Activated B cell treated with CpG ODN at 0.5 μM for 24 hours (primary cell): ENCODE measurements at regions of chr15 and their contacts with region 1.

Region 1: GRCh38 chr15:72783563-72784237 is at the start of gene ADPGK:
- DNase-seq: peak; percentile 100
- ATAC-seq: peak; percentile 84
- H3K4me3 Mint-ChIP-seq: peak within 1 kb of the TSS; percentile 94
- H3K27ac Mint-ChIP-seq: peak within 1 kb of the TSS; percentile 99
- H3K4me1 Mint-ChIP-seq: peaks cover 46% of the 10 kb centered on the region
- H3K27me3 Mint-ChIP-seq: no peaks in the 10 kb centered on the region
- CTCF ChIP-seq: no peak
- total RNA-seq, gene ADPGK: 77.7 and 99.8 TPM in 2 replicates

Region 2: DNA sequence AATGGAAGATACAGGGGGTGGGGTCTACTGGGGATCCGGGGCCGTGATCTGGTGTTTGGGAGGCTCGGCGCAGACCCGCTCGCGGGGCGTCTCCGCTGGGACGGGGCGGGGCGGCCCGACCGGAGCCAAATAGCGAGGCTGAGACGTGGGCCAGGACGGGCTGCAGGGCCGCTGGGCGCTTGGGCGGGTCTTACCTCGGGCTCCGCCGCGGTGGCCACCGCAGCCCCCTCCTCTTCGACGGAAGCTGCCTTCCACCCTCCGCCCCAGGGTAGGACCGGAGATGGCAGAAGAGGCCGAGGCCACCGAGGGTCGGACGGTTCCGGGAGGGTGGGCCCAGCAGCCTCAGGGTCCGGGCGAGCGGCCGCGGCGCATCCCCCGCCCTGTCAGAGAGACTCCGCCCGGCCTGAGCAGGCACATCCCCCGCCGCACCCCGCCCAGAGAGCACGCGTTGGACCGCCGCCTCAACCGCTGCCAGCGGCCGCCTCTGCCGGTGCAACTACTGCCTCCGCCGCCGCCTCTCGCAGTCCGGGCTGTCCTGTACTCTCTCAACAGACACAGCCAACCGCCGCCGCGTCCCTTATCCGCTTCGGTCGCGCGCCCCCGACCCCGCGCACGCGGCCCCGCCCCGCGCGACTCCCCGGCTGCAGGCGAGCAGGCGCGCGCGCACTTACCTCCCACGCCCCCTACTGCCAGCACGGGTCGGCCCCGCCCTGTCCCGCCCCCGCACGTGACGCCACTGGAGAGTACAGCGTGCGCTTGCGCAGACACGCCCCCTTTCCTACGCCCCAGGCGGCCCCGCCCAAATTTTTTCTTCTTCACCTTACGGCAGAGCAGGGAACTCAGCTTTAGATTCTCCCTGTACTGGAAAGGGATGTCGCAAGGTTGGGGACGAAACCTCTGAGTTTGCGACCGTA is 666.0 kb before region 1 on chr15 and contains the start of gene MYO9A:
- CTCF ChIA-PET with region 1: no interaction called
- POLR2A ChIA-PET with region 1: no interaction called
- intact Hi-C with region 1: loop called (anchors 5 kb)
- DNase-seq: peak; percentile 93
- ATAC-seq: peak; percentile 74
- H3K4me3 Mint-ChIP-seq: peak within 1 kb of the TSS; percentile 99
- H3K27ac Mint-ChIP-seq: peak within 1 kb of the TSS; percentile 99
- H3K4me1 Mint-ChIP-seq: peaks cover 33% of the 10 kb centered on the region
- H3K27me3 Mint-ChIP-seq: no peaks in the 10 kb centered on the region
- CTCF ChIP-seq: no peak
- total RNA-seq, gene MYO9A: 39.4 and 50.6 TPM in 2 replicates

Region 3: DNA sequence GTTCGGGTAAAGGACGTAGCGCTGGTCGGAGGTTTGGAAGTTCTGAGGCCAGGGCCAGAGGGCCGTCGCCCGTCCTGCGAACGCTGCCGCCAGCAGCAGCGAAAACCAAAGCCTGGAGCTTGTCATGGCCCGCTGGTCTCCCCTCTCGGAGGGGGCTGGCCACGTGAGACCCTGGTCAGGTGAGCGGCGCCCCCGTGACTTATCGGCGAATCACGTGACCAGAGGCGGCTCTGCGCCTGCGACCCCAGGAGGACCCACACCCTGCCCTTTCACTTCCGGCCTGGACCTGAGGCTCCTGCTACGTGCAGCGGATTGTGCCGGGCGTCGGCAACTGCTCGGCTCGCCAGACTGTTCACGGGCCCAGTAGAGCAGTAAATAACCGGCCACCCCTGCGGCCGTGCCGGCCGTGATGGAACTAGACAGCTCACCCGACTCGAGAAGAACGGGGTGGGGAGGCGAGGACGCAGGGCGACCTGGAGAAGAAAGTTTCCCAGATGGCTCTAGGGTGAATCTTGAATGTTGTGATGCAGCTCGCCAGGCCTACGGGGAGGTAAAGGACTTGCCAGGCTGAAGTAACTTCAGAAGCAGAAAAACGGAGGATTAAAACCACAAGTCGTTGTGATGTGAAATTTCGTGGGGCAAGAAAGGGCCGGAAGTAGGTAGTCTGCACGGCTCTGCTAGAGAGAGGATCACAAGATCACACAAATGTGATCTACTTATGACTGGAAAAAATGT is 407.7 kb before region 1 on chr15 and contains the start of gene HEXA:
- CTCF ChIA-PET with region 1: no interaction called
- POLR2A ChIA-PET with region 1: no interaction called
- intact Hi-C with region 1: loop called (anchors 1 kb)
- DNase-seq: peak; percentile 99
- ATAC-seq: peak; percentile 83
- H3K4me3 Mint-ChIP-seq: peak within 1 kb of the TSS; percentile 91
- H3K27ac Mint-ChIP-seq: peak within 1 kb of the TSS; percentile 97
- H3K4me1 Mint-ChIP-seq: peaks cover 58% of the 10 kb centered on the region
- H3K27me3 Mint-ChIP-seq: no peaks in the 10 kb centered on the region
- CTCF ChIP-seq: no peak
- total RNA-seq, gene HEXA: 100 and 102 TPM in 2 replicates

Region 4: GRCh38 chr15:72671535-72671934 is 112.2 kb before region 1 on chr15:
- CTCF ChIA-PET with region 1: no interaction called
- POLR2A ChIA-PET with region 1: no interaction called
- intact Hi-C with region 1: no loop called
- DNase-seq: no peak
- ATAC-seq: no peak
- H3K4me3 Mint-ChIP-seq: no peak overlapping the region
- H3K27ac Mint-ChIP-seq: no peak overlapping the region
- H3K4me1 Mint-ChIP-seq: peaks cover 7% of the 10 kb centered on the region
- H3K27me3 Mint-ChIP-seq: peaks cover 4% of the 10 kb centered on the region
- CTCF ChIP-seq: no peak

Region 5: GRCh38 chr15:72722071-72722696 is 61.5 kb before region 1 on chr15:
- CTCF ChIA-PET with region 1: interaction called, 3 read pairs
- POLR2A ChIA-PET with region 1: no interaction called
- intact Hi-C with region 1: loop called (anchors 2 kb)
- DNase-seq: peak; percentile 32
- ATAC-seq: no peak
- H3K4me3 Mint-ChIP-seq: no peak overlapping the region
- H3K27ac Mint-ChIP-seq: no peak overlapping the region
- H3K4me1 Mint-ChIP-seq: no peaks in the 10 kb centered on the region
- H3K27me3 Mint-ChIP-seq: no peaks in the 10 kb centered on the region
- CTCF ChIP-seq: no peak

Region 6: DNA sequence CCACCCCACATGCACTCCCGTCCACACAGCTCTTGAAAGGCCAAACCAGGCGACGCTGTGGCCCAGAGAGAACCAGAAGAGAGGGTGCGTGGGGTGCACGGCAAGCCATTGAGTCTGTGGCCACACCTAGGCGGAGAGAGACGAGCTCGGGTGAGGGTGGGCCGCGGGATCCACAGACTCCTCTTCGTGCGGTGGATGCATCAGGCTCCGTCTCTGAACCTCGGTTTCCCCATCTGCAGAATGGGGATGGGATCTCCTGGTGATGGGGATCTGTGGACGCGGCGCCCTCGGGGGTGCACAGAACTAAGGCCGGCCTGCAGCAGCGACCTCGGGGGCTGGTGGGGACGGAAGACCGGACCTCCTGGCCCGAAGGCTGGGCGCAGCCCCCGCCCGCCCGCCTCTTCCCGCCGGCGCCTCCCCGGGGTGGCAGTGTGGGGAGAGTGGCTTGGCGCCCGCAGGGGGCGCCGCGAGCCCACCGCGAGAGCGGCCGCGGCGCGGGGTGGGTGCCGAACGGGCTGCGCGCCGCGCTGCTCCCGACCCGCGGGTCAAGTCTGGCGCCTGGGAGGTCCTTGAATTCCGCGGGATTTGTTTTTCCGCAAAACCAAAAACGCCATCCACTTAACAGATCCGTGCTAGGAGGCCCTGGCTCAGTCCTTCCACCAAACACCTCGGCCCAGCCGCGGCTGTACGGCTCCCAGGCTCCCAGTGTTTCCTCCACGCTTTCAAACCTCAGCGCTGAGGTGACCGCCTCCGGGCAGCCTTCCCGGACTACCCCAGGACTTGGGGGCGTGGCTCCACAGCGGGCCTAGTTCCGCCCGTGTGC is 13.0 kb after region 1 on chr15:
- CTCF ChIA-PET with region 1: interaction called, 6 read pairs
- POLR2A ChIA-PET with region 1: interaction called, 4 read pairs
- intact Hi-C with region 1: loop called (anchors 1 kb)
- DNase-seq: peak; percentile 48
- ATAC-seq: peak; percentile 86
- H3K4me3 Mint-ChIP-seq: peak overlapping the region; percentile 81
- H3K27ac Mint-ChIP-seq: no peak overlapping the region
- H3K4me1 Mint-ChIP-seq: peaks cover 15% of the 10 kb centered on the region
- H3K27me3 Mint-ChIP-seq: peaks cover 46% of the 10 kb centered on the region
- CTCF ChIP-seq: no peak

Region 7: GRCh38 chr15:73633111-73633990 is 849.7 kb after region 1 on chr15 and contains the start of gene NPTN:
- CTCF ChIA-PET with region 1: no interaction called
- POLR2A ChIA-PET with region 1: no interaction called
- intact Hi-C with region 1: loop called (anchors 1 kb)
- DNase-seq: peak; percentile 96
- ATAC-seq: peak; percentile 90
- H3K4me3 Mint-ChIP-seq: peak within 1 kb of the TSS; percentile 85
- H3K27ac Mint-ChIP-seq: peak within 1 kb of the TSS; percentile 57
- H3K4me1 Mint-ChIP-seq: peaks cover 53% of the 10 kb centered on the region
- H3K27me3 Mint-ChIP-seq: peaks cover under 1% of the 10 kb centered on the region
- CTCF ChIP-seq: no peak
- total RNA-seq, gene NPTN: 36.1 and 39.0 TPM in 2 replicates